Panc1 (cell line): ENCODE measurements at regions of chr6 and their contacts with region 1.

Region 1: DNA sequence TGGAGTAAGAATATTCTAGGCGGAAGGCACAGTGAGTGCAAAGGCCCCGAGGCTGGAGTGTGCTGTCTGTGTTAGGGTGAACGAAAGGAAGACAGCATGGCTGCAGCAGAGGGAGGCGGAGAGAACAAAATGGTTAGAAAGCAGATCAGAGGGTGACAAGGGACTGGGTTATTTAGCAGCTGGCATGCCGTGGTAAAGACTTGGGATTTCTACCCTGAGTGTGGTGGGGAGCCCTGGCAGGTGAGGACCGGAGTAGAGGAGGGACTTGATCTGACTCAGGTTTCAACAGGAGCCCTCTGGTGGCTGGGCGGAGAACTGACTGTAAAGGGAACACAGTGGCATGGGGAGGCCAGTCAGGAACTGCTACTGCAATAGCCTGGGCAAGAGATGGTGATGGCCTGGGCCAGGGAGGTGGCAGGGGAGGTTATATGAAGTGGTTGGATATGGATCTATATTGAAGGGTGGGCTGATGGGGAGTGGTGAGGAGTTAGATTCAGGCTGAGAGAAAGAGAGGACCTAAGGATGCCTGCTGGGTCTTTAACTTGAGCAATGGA is 38.0 kb downstream of the PIM1 start:
- DNase-seq: peak; percentile 83
- ATAC-seq: peak; percentile 91
- H3K4me3 ChIP-seq: no peak overlapping the region
- H3K27ac ChIP-seq: no peak overlapping the region
- H3K4me1 ChIP-seq: no peaks in the 10 kb centered on the region; the same call in 1 of the 2 replicates
- H3K27me3 ChIP-seq: no peaks in the 10 kb centered on the region
- CTCF ChIP-seq: peak; percentile 90

Region 2: DNA sequence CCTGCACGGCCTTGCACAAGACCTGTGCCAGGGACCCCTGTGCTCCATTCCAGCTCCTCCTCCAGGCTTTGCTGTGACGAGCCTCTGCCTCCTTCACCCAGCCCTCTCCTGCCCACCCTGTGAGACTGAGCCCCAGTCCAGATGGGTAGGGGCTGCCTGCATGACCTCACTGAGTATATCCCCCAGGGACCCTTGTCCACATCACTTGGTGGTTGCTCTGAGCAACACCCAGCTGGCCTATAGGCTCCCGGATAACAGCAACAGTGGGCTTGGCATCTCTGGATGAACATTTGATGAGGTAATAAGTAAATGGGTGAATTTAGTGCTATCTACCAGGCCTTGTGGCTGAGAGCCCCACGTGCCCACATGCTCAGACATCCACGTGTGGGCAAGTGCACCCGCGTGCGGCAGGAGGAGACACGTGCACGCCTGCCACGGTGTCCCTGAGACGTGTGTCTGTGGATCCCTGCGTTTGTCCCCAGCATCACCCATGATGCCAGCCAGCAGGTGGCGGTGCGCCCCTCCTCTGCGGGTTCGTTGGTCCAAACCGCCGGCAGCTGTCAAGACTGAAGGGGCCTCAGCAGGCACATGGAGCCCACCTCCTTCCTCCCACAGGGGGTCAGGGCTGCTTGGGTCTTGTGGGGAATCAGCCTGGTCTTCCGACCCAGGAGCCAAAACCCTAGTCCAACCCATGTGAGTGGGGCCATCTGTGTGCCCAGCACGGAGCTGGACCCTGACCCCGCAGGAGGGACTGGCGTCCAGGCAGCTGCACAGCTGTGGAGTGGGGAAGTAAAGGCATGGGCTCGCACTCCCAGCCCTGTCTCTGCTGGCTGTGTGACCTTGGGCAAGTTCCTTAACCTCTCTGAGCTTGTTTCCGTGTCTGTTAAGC is 156.6 kb before region 1 on chr6:
- CTCF ChIA-PET with region 1: interaction called, 12 read pairs
- POLR2A ChIA-PET with region 1: no interaction called
- in situ Hi-C with region 1: no loop called
- intact Hi-C with region 1: no loop called
- DNase-seq: no peak
- ATAC-seq: peak; percentile 88
- H3K4me3 ChIP-seq: no peak overlapping the region
- H3K27ac ChIP-seq: peak overlapping the region; percentile 68
- H3K4me1 ChIP-seq: peaks cover 5% of the 10 kb centered on the region; the same call in 1 of the 2 replicates
- H3K27me3 ChIP-seq: no peaks in the 10 kb centered on the region
- CTCF ChIP-seq: peak; percentile 97

Region 3: GRCh38 chr6:37115236-37115895 is 92.6 kb before region 1 on chr6:
- CTCF ChIA-PET with region 1: interaction called, 12 read pairs
- POLR2A ChIA-PET with region 1: no interaction called
- in situ Hi-C with region 1: no loop called
- intact Hi-C with region 1: no loop called
- DNase-seq: no peak
- ATAC-seq: 0 out of 2 replicates have a peak, but pooled peaks have one; percentile 24
- H3K4me3 ChIP-seq: no peak overlapping the region
- H3K27ac ChIP-seq: peak overlapping the region; percentile 67; the same call in 1 of the 2 replicates
- H3K4me1 ChIP-seq: peaks cover 23% of the 10 kb centered on the region
- H3K27me3 ChIP-seq: no peaks in the 10 kb centered on the region
- CTCF ChIP-seq: no peak

Region 4: GRCh38 chr6:37177077-37177934 is 30.7 kb before region 1 on chr6:
- CTCF ChIA-PET with region 1: interaction called, 6 read pairs
- POLR2A ChIA-PET with region 1: no interaction called
- in situ Hi-C with region 1: no loop called
- intact Hi-C with region 1: loop called (anchors 5 kb)
- DNase-seq: no peak
- ATAC-seq: no peak
- H3K4me3 ChIP-seq: no peak overlapping the region
- H3K27ac ChIP-seq: no peak overlapping the region
- H3K4me1 ChIP-seq: peaks cover 19% of the 10 kb centered on the region
- H3K27me3 ChIP-seq: no peaks in the 10 kb centered on the region
- CTCF ChIP-seq: no peak

Region 5: GRCh38 chr6:37607944-37608343 is 400.0 kb after region 1 on chr6:
- CTCF ChIA-PET with region 1: no interaction called
- POLR2A ChIA-PET with region 1: no interaction called
- in situ Hi-C with region 1: no loop called
- intact Hi-C with region 1: no loop called
- DNase-seq: no peak
- ATAC-seq: no peak
- H3K4me3 ChIP-seq: no peak overlapping the region
- H3K27ac ChIP-seq: no peak overlapping the region
- H3K4me1 ChIP-seq: no peaks in the 10 kb centered on the region
- H3K27me3 ChIP-seq: no peaks in the 10 kb centered on the region
- CTCF ChIP-seq: no peak

Region 6: GRCh38 chr6:37990762-37991525 is 783.0 kb after region 1 on chr6:
- CTCF ChIA-PET with region 1: no interaction called
- POLR2A ChIA-PET with region 1: no interaction called
- in situ Hi-C with region 1: no loop called
- intact Hi-C with region 1: no loop called
- DNase-seq: no peak
- ATAC-seq: peak; percentile 63; the same call in 1 of the 2 replicates
- H3K4me3 ChIP-seq: no peak overlapping the region
- H3K27ac ChIP-seq: no peak overlapping the region
- H3K4me1 ChIP-seq: peaks cover 33% of the 10 kb centered on the region
- H3K27me3 ChIP-seq: no peaks in the 10 kb centered on the region
- CTCF ChIP-seq: no peak